SK-N-SH (cell line): ENCODE measurements at regions of chr1 and their contacts with region 1.

Region 1: GRCh38 chr1:180881806-180882509 is 30.7 kb upstream of the KIAA1614 start:
- DNase-seq: peak; percentile 65
- H3K4me3 ChIP-seq: no peak overlapping the region; a peak in 1 of 4 replicates
- H3K27ac ChIP-seq: no peak overlapping the region
- H3K4me1 ChIP-seq: no peaks in the 10 kb centered on the region
- H3K27me3 ChIP-seq: no peaks in the 10 kb centered on the region
- CTCF ChIP-seq: peak; percentile 69
- EP300 ChIP-seq: no peak
- RAD21 ChIP-seq: peak; percentile 89

Region 2: GRCh38 chr1:180926164-180926981 is 44.4 kb after region 1 on chr1:
- CTCF ChIA-PET with region 1: interaction called, 22 read pairs
- POLR2A ChIA-PET with region 1: interaction called, 5 read pairs
- DNase-seq: peak; percentile 90
- H3K4me3 ChIP-seq: no peak overlapping the region
- H3K27ac ChIP-seq: peak overlapping the region; percentile 30 to 99; a peak in 3 of 4 replicates
- H3K4me1 ChIP-seq: peaks cover 13 to 81% of the 10 kb centered on the region in 2 experiments; a peak in 3 of 4 replicates
- H3K27me3 ChIP-seq: no peaks in the 10 kb centered on the region
- CTCF ChIP-seq: no peak
- EP300 ChIP-seq: peak; percentile 17 to 92; a peak in 3 of 4 replicates
- RAD21 ChIP-seq: no peak; the same call in 1 of the 2 replicates

Region 3: DNA sequence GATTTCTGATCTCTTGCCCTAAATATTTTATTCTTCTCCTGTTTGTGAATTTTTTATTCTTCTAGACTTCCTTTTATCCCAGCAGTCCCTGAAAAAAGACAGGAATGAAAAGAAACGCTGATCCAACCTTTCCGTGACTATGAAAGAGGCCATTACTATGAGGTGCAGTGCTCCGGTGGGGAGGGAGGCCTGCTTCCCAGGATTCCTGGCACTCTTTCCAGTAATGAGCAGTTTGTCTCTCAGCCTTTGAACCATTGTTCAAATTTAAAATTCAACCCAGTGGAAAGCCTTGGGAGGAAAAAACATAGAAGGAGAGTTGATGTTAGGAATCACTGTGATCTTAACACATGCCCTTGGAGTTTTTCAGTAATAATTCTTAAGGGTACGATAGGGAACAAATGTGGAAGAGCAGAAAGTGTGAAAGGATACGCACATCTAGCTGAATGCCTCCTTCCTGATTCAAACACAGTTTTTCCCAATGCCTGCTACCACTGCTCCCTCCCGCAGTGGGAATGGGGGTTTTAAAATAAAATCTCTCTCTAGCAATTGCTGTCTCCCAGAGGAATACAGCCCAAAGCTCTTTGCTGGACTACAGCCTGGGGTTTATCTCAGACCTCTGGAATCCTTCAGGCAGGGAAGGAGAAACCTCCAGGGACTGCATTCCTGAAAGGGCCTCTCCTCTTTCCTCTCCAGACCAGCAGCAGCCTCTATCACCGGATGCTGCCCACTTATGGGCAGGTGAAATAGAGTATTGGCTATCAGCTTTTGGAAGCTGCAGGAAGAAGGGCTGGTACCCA is 212.7 kb after region 1 on chr1:
- CTCF ChIA-PET with region 1: interaction called, 11 read pairs
- POLR2A ChIA-PET with region 1: no interaction called
- DNase-seq: no peak
- H3K4me3 ChIP-seq: no peak overlapping the region
- H3K27ac ChIP-seq: peak overlapping the region; percentile 98 to 99
- H3K4me1 ChIP-seq: peaks cover 60 to 62% of the 10 kb centered on the region in 2 experiments
- H3K27me3 ChIP-seq: no peaks in the 10 kb centered on the region
- CTCF ChIP-seq: no peak
- EP300 ChIP-seq: peak in 1 of 2 experiments; percentile 57; a peak in 1 of 4 replicates
- RAD21 ChIP-seq: no peak

Region 4: DNA sequence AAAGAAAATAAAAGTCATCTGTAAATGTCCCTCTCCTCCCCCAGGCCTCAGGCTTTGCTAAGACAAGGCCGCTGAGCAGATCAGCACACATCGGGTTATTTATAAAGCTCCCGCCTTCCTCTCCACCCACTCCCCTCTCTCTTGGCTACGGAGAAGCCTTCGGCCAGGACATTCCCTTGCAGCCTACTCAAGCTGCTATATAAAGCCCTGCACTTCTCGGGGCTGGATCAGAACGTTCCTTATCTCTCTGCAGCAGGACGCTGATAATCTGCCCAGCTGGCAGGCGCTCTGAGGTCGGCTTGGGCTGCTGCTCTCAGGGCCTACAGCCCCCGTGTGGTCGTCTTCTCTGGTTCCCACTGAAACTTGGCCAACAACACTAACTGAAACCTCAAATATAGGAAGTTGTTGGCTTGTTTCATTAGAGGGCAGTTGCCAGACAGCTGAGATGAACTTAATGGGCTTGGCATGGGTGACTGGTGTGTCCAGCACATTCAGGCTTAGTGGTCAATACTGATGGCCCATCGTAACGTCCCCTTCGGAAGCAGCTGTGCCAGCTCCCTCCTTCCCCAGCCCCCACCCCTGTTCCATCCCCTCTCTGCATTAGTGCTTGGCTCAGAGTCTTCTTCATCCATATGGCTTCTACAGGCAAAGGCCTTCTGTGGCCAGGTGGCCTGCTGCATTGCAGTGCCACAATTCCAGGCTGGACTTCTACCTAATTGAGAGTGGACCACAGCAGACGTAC is 271.1 kb after region 1 on chr1:
- CTCF ChIA-PET with region 1: interaction called, 58 read pairs
- POLR2A ChIA-PET with region 1: no interaction called
- DNase-seq: peak; percentile 68
- H3K4me3 ChIP-seq: no peak overlapping the region; a peak in 1 of 4 replicates
- H3K27ac ChIP-seq: peak overlapping the region in 1 of 2 experiments; percentile 4; a peak in 2 of 4 replicates
- H3K4me1 ChIP-seq: peaks cover 4 to 20% of the 10 kb centered on the region in 2 experiments; a peak in 2 of 4 replicates
- H3K27me3 ChIP-seq: no peaks in the 10 kb centered on the region
- CTCF ChIP-seq: peak; percentile 15; the same call in 1 of the 2 replicates
- EP300 ChIP-seq: no peak
- RAD21 ChIP-seq: peak; percentile 40